H1 (cell line): ENCODE measurements at regions of chr1 and their contacts with region 1.

Region 1: DNA sequence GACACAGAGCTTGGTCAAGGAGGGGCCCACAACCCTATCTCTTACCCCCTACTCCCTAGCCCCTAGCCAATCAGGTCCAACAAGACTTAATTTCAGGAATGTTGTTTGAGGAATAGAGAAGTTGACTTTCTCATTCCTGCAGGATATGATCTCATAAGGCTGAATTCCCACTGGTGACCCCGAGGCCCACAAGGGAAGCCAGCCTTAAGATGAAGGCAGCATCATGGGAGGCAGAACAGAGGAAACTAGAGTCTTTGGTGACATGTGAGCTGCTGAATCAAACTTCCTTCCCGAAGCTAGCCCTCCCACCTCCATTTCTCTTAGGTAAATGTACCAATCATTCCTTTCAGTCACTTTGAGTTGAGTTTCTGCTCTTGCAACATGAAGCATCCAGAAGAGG is 9.1 kb upstream of the PDIK1L start:
- DNase-seq: no peak
- H3K4me3 ChIP-seq: no peak overlapping the region
- H3K27ac ChIP-seq: no peak overlapping the region
- H3K4me1 ChIP-seq: no peaks in the 10 kb centered on the region
- H3K27me3 ChIP-seq: no peaks in the 10 kb centered on the region; a peak in 2 of 7 replicates
- CTCF ChIP-seq: no peak
- EP300 ChIP-seq: no peak
- POLR2A ChIP-seq: no peak
- RAD21 ChIP-seq: no peak

Region 2: DNA sequence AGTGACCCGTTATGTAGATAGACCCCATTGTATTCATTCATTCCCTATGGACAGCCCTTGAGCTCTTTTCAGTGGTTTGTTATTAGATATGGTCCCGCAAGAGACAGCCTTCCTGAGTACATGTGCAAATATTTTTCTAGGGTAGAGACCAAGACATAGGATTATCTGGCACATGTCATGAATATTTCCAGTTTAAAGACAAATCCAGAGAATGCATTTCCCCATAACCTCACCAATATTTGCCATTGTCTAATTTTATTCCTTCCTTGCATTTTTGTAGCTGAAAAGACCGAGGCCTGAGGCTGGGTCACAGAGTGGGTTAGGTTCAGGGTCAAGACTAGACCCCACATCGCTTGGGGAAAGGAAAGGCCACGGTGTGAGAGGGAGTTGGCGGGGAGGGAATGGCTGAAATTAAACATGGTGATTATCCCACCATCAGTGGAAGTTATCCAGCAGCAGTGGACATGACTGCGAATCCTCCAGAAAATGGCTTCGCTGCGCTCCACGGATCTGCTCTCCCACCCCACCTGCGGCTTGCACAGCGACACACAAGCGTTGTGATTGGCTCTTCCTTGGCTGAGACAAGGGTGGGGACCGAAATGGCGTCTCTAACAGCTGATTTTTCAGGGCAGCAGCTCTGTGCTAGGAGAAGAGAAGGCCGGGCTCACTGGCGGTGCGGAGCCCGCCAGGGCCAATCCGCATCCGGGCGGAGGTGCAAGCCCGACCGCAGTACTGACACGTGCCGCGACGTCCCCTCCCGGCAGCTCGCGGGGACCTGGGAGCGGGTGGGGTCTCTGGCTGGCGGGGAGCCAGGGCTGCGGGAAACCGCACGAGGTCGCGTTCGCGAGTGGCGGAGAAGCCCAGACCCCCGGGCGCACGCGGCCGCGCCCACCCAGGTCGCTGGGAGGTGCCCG is 180.2 kb before region 1 on chr1:
- CTCF ChIA-PET with region 1: no interaction called
- POLR2A ChIA-PET with region 1: no interaction called
- DNase-seq: no peak
- H3K4me3 ChIP-seq: peak overlapping the region; percentile 46 to 69 (median 58)
- H3K27ac ChIP-seq: no peak overlapping the region
- H3K4me1 ChIP-seq: peaks cover 6 to 20% (median 13%) of the 10 kb centered on the region in 4 experiments
- H3K27me3 ChIP-seq: peaks cover 0 to 6% (median 2%) of the 10 kb centered on the region in 4 experiments; a peak in 4 of 7 replicates
- CTCF ChIP-seq: no peak
- EP300 ChIP-seq: no peak
- POLR2A ChIP-seq: peak in 1 of 2 experiments; percentile 15; a peak in 1 of 3 replicates
- RAD21 ChIP-seq: no peak

Region 3: DNA sequence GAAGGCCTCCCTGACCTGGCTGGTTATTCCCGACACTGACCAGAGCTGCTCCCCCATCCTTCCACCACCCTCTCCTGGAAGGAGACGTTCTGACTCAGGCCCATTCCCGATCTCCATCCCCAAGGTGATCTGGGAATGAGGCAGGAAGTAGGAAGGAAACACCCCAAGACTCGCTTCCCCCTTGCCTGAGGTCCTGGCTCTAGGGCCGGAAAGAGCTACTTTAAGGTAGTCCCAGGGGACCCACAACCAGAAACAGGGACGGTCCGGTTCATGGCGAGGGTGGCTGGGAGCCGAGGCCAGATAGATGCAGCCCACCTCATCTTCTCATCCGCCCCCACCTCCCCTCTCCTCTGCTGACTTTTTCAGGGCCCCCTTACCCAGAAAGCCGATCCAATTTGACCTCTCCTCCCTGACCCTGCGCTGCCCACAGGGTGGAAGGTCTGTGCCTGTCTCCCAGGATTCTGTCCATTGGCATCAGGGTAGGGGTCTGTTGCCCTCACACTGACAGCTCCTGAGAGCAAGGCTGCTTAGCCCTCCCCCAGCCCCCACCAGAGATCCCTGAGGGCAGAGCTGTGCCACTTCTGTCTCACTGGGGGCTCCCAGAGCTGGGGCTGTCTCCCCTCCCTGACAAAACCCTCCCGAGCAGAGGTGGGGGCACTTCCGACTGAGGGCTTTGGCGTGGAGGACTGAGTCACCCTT is 53.6 kb after region 1 on chr1:
- CTCF ChIA-PET with region 1: interaction called, 11 read pairs
- POLR2A ChIA-PET with region 1: interaction called, 3 read pairs
- DNase-seq: no peak
- H3K4me3 ChIP-seq: peak overlapping the region in 3 of 4 experiments; percentile 35 to 52 (median 42); a peak in 6 of 8 replicates
- H3K27ac ChIP-seq: no peak overlapping the region
- H3K4me1 ChIP-seq: peaks cover 14 to 48% (median 30%) of the 10 kb centered on the region in 4 experiments
- H3K27me3 ChIP-seq: peaks cover 31 to 81% (median 70%) of the 10 kb centered on the region in 4 experiments
- CTCF ChIP-seq: no peak
- EP300 ChIP-seq: no peak
- POLR2A ChIP-seq: no peak
- RAD21 ChIP-seq: no peak

Region 4: GRCh38 chr1:26169669-26170471 is 67.3 kb after region 1 on chr1 and contains the start of gene ZNF593:
- CTCF ChIA-PET with region 1: interaction called, 11 read pairs
- POLR2A ChIA-PET with region 1: no interaction called
- DNase-seq: peak; percentile 78 to 96
- H3K4me3 ChIP-seq: peak within 1 kb of the TSS; percentile 71 to 79 (median 74)
- H3K27ac ChIP-seq: peak within 1 kb of the TSS; percentile 23; the same call in 1 of the 2 replicates
- H3K4me1 ChIP-seq: peaks cover 5 to 18% (median 13%) of the 10 kb centered on the region in 4 experiments
- H3K27me3 ChIP-seq: peaks cover 0 to 11% (median 6%) of the 10 kb centered on the region in 4 experiments; a peak in 6 of 7 replicates
- CTCF ChIP-seq: peak in 2 of 3 experiments; percentile 84 to 96; a peak in 3 of 4 replicates
- EP300 ChIP-seq: no peak; a peak in 1 of 3 replicates
- POLR2A ChIP-seq: peak in 1 of 2 experiments; percentile 86; a peak in 2 of 3 replicates
- RAD21 ChIP-seq: peak; percentile 17 to 41; a peak in 2 of 4 replicates
- total RNA-seq, gene ZNF593: 38.2 and 40.2 TPM in 2 replicates

Region 5: DNA sequence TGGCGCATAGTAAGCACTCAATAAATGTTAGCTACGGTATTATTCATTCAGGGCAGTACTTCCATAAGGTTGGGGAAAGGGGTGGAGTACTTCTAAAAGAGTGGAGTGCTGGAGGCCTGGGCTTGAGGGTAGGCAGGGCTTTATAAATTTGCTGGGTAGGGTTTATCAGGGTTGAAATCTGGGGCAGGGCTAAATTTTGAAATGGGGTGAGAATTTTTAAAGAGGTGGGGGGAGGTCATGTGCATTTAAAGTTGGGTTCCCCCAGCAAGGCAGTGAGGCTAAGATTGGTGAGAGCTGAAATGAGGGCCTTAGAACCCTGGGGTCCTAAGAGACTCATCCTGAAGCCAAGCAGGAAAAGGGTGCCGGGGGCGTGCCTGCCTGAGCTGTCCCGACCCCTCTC is 97.9 kb after region 1 on chr1:
- CTCF ChIA-PET with region 1: no interaction called
- POLR2A ChIA-PET with region 1: no interaction called
- DNase-seq: no peak
- H3K4me3 ChIP-seq: peak overlapping the region in 2 of 4 experiments; percentile 28 to 50; a peak in 2 of 8 replicates
- H3K27ac ChIP-seq: no peak overlapping the region
- H3K4me1 ChIP-seq: peaks cover 0 to 12% (median 5%) of the 10 kb centered on the region in 4 experiments; a peak in 5 of 7 replicates
- H3K27me3 ChIP-seq: no peaks in the 10 kb centered on the region
- CTCF ChIP-seq: no peak
- EP300 ChIP-seq: no peak
- POLR2A ChIP-seq: no peak
- RAD21 ChIP-seq: no peak